ENCODE measurements at regions of chr15 and their contacts with region 1.

Region 1: GRCh38 chr15:62847900-62848489 is 194.6 kb upstream of the TPM1 start:
- DNase-seq: peak; percentile 74
- ATAC-seq: peak; percentile 68
- H3K4me3 ChIP-seq: no peak overlapping the region
- H3K27ac ChIP-seq: no peak overlapping the region
- H3K4me1 ChIP-seq: peaks cover 27% of the 10 kb centered on the region
- H3K27me3 ChIP-seq: no peaks in the 10 kb centered on the region
- CTCF ChIP-seq: peak; percentile 85

Region 2: DNA sequence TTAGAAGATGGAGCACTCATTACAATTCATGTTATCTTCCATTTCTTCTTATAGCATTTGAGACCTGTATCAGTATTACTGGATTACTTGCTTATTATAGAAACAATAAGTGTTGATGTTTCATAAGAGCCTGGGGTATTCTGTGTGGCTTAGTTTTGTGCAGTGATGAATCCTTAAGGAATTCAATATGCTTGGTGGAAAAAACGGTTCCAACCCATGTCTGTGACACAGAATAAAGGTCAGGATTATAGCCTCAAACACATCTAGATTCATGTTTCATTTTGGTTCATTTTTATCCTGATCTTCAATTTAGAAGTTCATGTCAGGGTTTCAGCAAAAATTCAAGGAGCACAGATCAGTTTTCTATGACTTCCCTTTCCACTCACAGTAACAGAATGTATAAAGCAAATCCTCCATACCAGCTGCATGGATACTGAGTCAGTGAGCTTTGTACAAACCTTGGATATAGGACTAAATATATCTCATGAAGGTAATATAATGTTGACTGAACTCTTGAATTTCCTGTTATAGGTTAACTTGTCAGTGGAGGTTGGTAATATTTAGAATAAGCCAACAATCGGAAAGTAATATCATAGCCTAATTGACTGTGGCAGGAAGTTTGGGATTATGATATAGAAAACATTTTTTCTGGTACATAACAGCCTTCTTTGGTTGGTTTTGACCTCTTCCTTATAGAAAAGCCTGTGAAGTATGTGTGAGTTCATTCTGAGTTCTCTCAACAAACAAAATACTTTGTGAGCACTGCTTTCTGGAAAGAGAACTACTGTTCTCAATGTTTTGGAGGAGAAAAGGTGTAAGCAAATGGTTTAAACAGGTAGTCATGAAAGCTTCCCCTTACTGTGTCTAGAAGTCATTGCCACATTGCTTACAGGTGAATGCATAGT is 23.6 kb before region 1 on chr15:
- CTCF ChIA-PET with region 1: no interaction called
- POLR2A ChIA-PET with region 1: no interaction called
- intact Hi-C with region 1: no loop called
- DNase-seq: peak; percentile 51
- ATAC-seq: peak; percentile 31; the same call in 1 of the 2 replicates
- H3K4me3 ChIP-seq: no peak overlapping the region
- H3K27ac ChIP-seq: no peak overlapping the region
- H3K4me1 ChIP-seq: peaks cover 17% of the 10 kb centered on the region; the same call in 1 of the 2 replicates
- H3K27me3 ChIP-seq: no peaks in the 10 kb centered on the region
- CTCF ChIP-seq: no peak

Region 3: GRCh38 chr15:62896978-62897647 is 49.1 kb after region 1 on chr15:
- CTCF ChIA-PET with region 1: no interaction called
- POLR2A ChIA-PET with region 1: no interaction called
- intact Hi-C with region 1: loop called (anchors 2 kb)
- DNase-seq: peak; percentile 97
- ATAC-seq: peak; percentile 85
- H3K4me3 ChIP-seq: peak overlapping the region; percentile 43; the same call in 1 of the 2 replicates
- H3K27ac ChIP-seq: peak overlapping the region; percentile 99
- H3K4me1 ChIP-seq: peaks cover 55% of the 10 kb centered on the region
- H3K27me3 ChIP-seq: no peaks in the 10 kb centered on the region
- CTCF ChIP-seq: no peak

Region 4: DNA sequence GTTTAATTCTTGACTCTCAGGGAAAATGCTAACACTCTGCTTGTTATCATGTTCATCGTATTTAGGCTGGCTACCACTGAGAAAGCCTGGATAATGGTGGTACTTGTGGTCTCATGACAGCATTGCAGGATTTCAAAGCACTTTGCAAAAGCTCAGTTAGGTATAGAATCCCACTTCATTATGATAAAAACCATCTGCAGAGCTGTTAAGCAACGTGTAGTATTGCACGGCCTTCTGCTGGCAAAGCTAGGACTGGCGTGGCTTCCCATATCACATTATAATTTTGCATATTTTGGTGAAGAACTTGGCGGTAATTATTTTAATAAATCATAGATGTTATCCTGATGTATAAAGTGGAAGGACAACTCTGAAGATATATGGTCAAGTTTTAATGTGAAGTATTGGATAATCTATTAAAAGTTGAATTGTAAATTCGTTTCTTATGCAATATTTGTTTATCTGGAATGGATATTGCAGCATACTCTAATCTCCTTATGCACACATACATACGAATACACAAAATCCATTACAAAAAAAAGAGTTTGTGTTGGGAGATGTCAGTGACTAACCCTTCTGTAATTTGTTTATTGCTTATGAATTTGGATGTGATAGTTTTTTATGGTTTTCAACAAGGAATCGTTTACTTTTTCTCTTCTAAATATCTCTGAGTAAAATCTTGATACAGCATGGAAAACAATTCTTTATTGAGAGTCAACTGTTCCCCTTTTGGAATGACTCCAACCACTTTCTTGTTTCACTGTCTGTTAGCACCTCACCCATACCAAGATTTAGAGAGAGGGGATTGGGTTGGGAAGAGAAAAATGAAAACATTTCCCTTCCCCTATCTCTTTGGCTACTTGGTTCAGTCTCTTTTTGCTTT is 350.6 kb after region 1 on chr15:
- CTCF ChIA-PET with region 1: no interaction called
- POLR2A ChIA-PET with region 1: no interaction called
- intact Hi-C with region 1: no loop called
- DNase-seq: peak; percentile 72
- ATAC-seq: peak; percentile 74
- H3K4me3 ChIP-seq: peak overlapping the region; percentile 2; the same call in 1 of the 2 replicates
- H3K27ac ChIP-seq: peak overlapping the region; percentile 62
- H3K4me1 ChIP-seq: peaks cover 58% of the 10 kb centered on the region
- H3K27me3 ChIP-seq: no peaks in the 10 kb centered on the region
- CTCF ChIP-seq: no peak